ENCODE measurements at regions of chr6 and their contacts with region 1.

Region 1: GRCh38 chr6:153023977-153024708 is 21.6 kb upstream of the MTRF1L start:
- DNase-seq: peak; percentile 45
- ATAC-seq: peak; percentile 100
- H3K4me3 ChIP-seq: no peak overlapping the region
- H3K27ac ChIP-seq: no peak overlapping the region
- H3K4me1 ChIP-seq: no peaks in the 10 kb centered on the region
- H3K27me3 ChIP-seq: no peaks in the 10 kb centered on the region; a peak in 1 of 4 replicates
- CTCF ChIP-seq: peak; percentile 66 to 86 (median 76); a peak in 5 of 6 replicates
- EP300 ChIP-seq: no peak
- POLR2A ChIP-seq: no peak
- RAD21 ChIP-seq: peak; percentile 77

Region 2: GRCh38 chr6:152552616-152553209 is 471.4 kb before region 1 on chr6:
- CTCF ChIA-PET with region 1: no interaction called
- POLR2A ChIA-PET with region 1: no interaction called
- RAD21 ChIA-PET with region 1: no interaction called
- SMC1A ChIA-PET with region 1: no interaction called
- in situ Hi-C with region 1: no loop called
- intact Hi-C with region 1: loop called (anchors 10 kb)
- DNase-seq: peak; percentile 11
- ATAC-seq: peak; percentile 99
- H3K4me3 ChIP-seq: no peak overlapping the region
- H3K27ac ChIP-seq: no peak overlapping the region
- H3K4me1 ChIP-seq: no peaks in the 10 kb centered on the region
- H3K27me3 ChIP-seq: no peaks in the 10 kb centered on the region
- CTCF ChIP-seq: peak; percentile 72 to 79 (median 72)
- EP300 ChIP-seq: no peak
- POLR2A ChIP-seq: no peak
- RAD21 ChIP-seq: peak; percentile 78

Region 3: DNA sequence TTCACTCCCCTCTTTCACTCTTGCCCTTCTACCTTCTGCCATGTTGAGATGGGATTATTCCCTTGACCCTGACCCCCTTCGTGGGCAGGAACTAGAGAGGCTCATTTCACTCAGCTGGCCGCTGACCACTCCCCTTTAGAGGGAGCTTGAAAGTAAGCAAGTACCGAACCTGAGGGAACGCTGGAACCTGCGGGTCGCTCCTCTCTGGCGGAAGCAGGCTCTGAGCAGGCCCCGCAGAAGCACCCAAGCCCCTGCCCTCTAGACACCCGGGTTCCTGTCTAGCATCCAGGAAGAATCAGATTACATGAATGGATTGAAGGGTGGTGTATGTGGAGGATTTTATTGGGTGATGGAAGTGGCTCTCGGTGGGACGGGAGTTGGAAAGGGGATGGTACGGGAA is 338.3 kb before region 1 on chr6:
- CTCF ChIA-PET with region 1: no interaction called
- POLR2A ChIA-PET with region 1: no interaction called
- RAD21 ChIA-PET with region 1: no interaction called
- SMC1A ChIA-PET with region 1: no interaction called
- in situ Hi-C with region 1: no loop called
- intact Hi-C with region 1: no loop called
- DNase-seq: no peak
- ATAC-seq: no peak
- H3K4me3 ChIP-seq: no peak overlapping the region
- H3K27ac ChIP-seq: no peak overlapping the region
- H3K4me1 ChIP-seq: no peaks in the 10 kb centered on the region
- H3K27me3 ChIP-seq: no peaks in the 10 kb centered on the region
- CTCF ChIP-seq: no peak
- EP300 ChIP-seq: no peak
- POLR2A ChIP-seq: no peak
- RAD21 ChIP-seq: no peak

Region 4: DNA sequence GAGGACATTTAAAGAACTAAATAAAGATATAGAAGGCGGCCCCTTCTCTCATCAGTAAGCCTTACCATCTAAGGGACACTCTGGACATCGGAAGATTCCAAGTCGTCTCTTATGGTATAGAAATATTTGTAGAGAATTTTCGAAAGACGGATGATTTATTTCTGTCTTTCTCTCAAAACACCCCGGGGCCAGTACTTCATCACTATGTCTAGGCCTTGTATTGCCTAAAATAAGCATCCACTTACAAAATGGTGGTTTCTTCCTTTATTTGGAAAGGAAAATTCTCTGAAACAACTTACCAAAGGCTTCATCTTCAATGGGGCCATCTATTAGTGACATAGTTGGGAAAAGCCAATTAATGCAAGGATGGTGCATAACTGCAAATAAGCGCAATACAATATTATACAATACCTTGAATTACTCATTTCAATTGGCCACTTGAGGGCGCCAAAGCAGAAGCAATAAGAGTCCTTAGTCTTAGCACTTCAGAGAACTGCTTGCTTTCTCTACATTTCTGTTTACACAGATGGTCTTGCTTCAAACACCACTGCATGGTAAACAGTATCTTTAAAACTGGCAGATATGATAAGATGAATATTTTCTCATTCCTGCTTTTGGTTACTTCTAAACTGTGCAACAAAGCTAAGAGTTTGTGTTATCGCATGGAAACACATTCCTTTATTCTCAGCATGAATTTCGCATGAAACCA is 160.4 kb before region 1 on chr6:
- CTCF ChIA-PET with region 1: interaction called, 6 read pairs
- POLR2A ChIA-PET with region 1: no interaction called
- RAD21 ChIA-PET with region 1: no interaction called
- SMC1A ChIA-PET with region 1: interaction called, 4 read pairs
- in situ Hi-C with region 1: loop called (anchors 5 kb)
- intact Hi-C with region 1: loop called (anchors 1 kb)
- DNase-seq: peak; percentile 8
- ATAC-seq: peak; percentile 96
- H3K4me3 ChIP-seq: no peak overlapping the region
- H3K27ac ChIP-seq: no peak overlapping the region
- H3K4me1 ChIP-seq: no peaks in the 10 kb centered on the region
- H3K27me3 ChIP-seq: no peaks in the 10 kb centered on the region
- CTCF ChIP-seq: peak; percentile 54 to 76 (median 60); a peak in 5 of 6 replicates
- EP300 ChIP-seq: no peak
- POLR2A ChIP-seq: no peak
- RAD21 ChIP-seq: peak; percentile 83

Region 5: GRCh38 chr6:152948150-152948768 is 75.9 kb before region 1 on chr6:
- CTCF ChIA-PET with region 1: interaction called, 14 read pairs
- POLR2A ChIA-PET with region 1: interaction called, 4 read pairs
- RAD21 ChIA-PET with region 1: interaction called, 15 read pairs
- SMC1A ChIA-PET with region 1: interaction called, 8 read pairs
- in situ Hi-C with region 1: no loop called
- intact Hi-C with region 1: no loop called
- DNase-seq: no peak
- ATAC-seq: peak; percentile 91
- H3K4me3 ChIP-seq: no peak overlapping the region
- H3K27ac ChIP-seq: no peak overlapping the region
- H3K4me1 ChIP-seq: no peaks in the 10 kb centered on the region
- H3K27me3 ChIP-seq: no peaks in the 10 kb centered on the region
- CTCF ChIP-seq: peak; percentile 54 to 62 (median 60)
- EP300 ChIP-seq: no peak
- POLR2A ChIP-seq: no peak
- RAD21 ChIP-seq: peak; percentile 79

Region 6: DNA sequence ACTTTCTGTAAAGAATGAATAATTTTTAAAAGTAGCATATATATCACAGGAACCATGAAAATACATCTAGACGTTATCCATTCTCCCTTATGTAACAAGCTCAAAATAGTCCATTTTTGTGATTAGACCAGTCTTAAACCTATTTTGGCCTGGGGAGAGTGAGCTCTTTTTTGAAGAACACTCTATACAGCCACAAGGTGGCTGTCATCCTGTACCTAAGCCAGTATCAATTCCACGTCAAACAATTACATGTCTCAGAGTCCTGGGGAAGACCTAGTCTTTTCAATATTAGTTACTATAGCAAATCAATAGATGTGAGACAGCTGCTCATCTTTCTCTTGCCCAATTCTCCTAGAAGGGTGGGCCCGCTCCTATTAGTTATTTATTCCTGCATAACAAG is 69.7 kb before region 1 on chr6:
- CTCF ChIA-PET with region 1: interaction called, 47 read pairs
- POLR2A ChIA-PET with region 1: interaction called, 4 read pairs
- RAD21 ChIA-PET with region 1: interaction called, 16 read pairs
- SMC1A ChIA-PET with region 1: interaction called, 23 read pairs
- in situ Hi-C with region 1: no loop called
- intact Hi-C with region 1: loop called (anchors 1 kb)
- DNase-seq: no peak
- ATAC-seq: peak; percentile 84
- H3K4me3 ChIP-seq: no peak overlapping the region
- H3K27ac ChIP-seq: no peak overlapping the region
- H3K4me1 ChIP-seq: no peaks in the 10 kb centered on the region
- H3K27me3 ChIP-seq: no peaks in the 10 kb centered on the region
- CTCF ChIP-seq: peak in 2 of 3 experiments; percentile 26 to 37; a peak in 2 of 6 replicates
- EP300 ChIP-seq: no peak
- POLR2A ChIP-seq: no peak
- RAD21 ChIP-seq: peak; percentile 45; the same call in 1 of the 2 replicates

Region 7: DNA sequence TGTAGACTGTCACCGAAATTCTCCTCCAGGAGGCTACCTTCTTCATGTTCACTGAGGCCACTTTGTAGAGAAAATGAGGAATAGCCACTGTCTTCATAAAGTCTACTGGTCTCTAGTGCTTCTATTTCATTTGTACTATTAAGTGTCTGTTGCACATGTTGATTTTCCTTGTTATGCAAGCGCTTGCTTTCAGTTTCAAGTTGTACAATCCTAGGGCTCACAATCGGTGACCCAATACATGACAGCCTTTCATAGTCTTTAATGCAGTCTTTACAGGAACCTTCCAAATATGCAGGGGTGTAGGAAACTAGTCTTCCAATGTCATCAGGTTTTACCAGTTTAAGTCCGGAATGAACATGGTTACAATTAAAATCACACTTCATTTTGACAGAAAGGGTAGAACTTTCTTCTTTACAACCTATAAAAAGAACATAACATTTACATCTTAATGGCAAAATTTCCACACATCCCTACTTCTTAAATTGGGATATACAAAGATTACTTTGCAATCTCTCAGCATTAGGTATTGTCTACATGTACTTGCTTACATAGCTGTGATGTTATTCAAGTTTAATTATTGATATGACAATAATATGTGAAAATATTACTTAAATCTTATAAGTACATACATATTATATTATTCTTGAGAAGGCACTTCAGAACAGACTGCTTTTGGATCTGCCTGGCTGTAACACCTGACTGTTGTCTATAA is 48.8 kb before region 1 on chr6:
- CTCF ChIA-PET with region 1: interaction called, 4 read pairs
- POLR2A ChIA-PET with region 1: no interaction called
- RAD21 ChIA-PET with region 1: interaction called, 5 read pairs
- SMC1A ChIA-PET with region 1: no interaction called
- in situ Hi-C with region 1: no loop called
- intact Hi-C with region 1: loop called (anchors 5 kb)
- DNase-seq: no peak
- ATAC-seq: peak; percentile 76
- H3K4me3 ChIP-seq: peak overlapping the region; percentile 25
- H3K27ac ChIP-seq: no peak overlapping the region
- H3K4me1 ChIP-seq: peaks cover 4% of the 10 kb centered on the region; the same call in 1 of the 2 replicates
- H3K27me3 ChIP-seq: no peaks in the 10 kb centered on the region
- CTCF ChIP-seq: no peak
- EP300 ChIP-seq: no peak
- POLR2A ChIP-seq: no peak
- RAD21 ChIP-seq: no peak

Region 8: GRCh38 chr6:153002607-153003365 is 21.4 kb before region 1 on chr6 and contains the start of gene MTRF1L:
- CTCF ChIA-PET with region 1: interaction called, 3 read pairs
- POLR2A ChIA-PET with region 1: interaction called, 10 read pairs
- RAD21 ChIA-PET with region 1: no interaction called
- SMC1A ChIA-PET with region 1: interaction called, 3 read pairs
- in situ Hi-C with region 1: no loop called
- intact Hi-C with region 1: no loop called
- DNase-seq: peak; percentile 82
- ATAC-seq: peak; percentile 96
- H3K4me3 ChIP-seq: peak within 1 kb of the TSS; percentile 84
- H3K27ac ChIP-seq: peak within 1 kb of the TSS; percentile 61
- H3K4me1 ChIP-seq: no peaks in the 10 kb centered on the region
- H3K27me3 ChIP-seq: no peaks in the 10 kb centered on the region
- CTCF ChIP-seq: no peak
- EP300 ChIP-seq: no peak
- POLR2A ChIP-seq: peak; percentile 66; the same call in 1 of the 2 replicates
- RAD21 ChIP-seq: no peak
- polyA plus RNA-seq, gene MTRF1L: 5.1 to 9.0 TPM